Right cardiac atrium (tissue), 5 donors: ENCODE measurements at regions of chr13 and their contacts with region 1.

Region 1: GRCh38 chr13:49690992-49691886 is at the start of gene EBPL:
- DNase-seq: peak; percentile 94 to 98 (median 97)
- ATAC-seq: peak; percentile 99
- H3K4me3 ChIP-seq: peak within 1 kb of the TSS; percentile 73
- H3K27ac ChIP-seq: peak within 1 kb of the TSS; percentile 39
- H3K4me1 ChIP-seq: no peaks in the 10 kb centered on the region
- H3K27me3 ChIP-seq: no peaks in the 10 kb centered on the region
- total RNA-seq, gene EBPL: 8.1 to 11.5 (median 11.0) TPM

Region 2: GRCh38 chr13:49641801-49642291 is 49.4 kb before region 1 on chr13:
- intact Hi-C with region 1: no loop called
- DNase-seq: peak; percentile 49 to 73 (median 67)
- ATAC-seq: peak; percentile 89 to 93
- H3K4me3 ChIP-seq: no peak overlapping the region
- H3K27ac ChIP-seq: peak overlapping the region; percentile 4
- H3K4me1 ChIP-seq: no peaks in the 10 kb centered on the region
- H3K27me3 ChIP-seq: no peaks in the 10 kb centered on the region

Region 3: GRCh38 chr13:49749848-49750247 is 58.6 kb after region 1 on chr13:
- intact Hi-C with region 1: no loop called
- DNase-seq: no peak
- ATAC-seq: no peak
- H3K4me3 ChIP-seq: no peak overlapping the region
- H3K27ac ChIP-seq: no peak overlapping the region
- H3K4me1 ChIP-seq: no peaks in the 10 kb centered on the region
- H3K27me3 ChIP-seq: no peaks in the 10 kb centered on the region

Region 4: GRCh38 chr13:49792550-49793324 is 101.5 kb after region 1 on chr13 and contains the start of gene KPNA3:
- intact Hi-C with region 1: loop called in 1 of 4 experiments (anchors 5 kb)
- DNase-seq: peak; percentile 97 to 99 (median 99)
- ATAC-seq: peak; percentile 98
- H3K4me3 ChIP-seq: peak within 1 kb of the TSS; percentile 80
- H3K27ac ChIP-seq: peak within 1 kb of the TSS; percentile 98
- H3K4me1 ChIP-seq: no peaks in the 10 kb centered on the region
- H3K27me3 ChIP-seq: no peaks in the 10 kb centered on the region
- total RNA-seq, gene KPNA3: 45.5 to 59.1 (median 56.5) TPM